ENCODE measurements at regions of chr20 and their contacts with region 1.

Region 1: DNA sequence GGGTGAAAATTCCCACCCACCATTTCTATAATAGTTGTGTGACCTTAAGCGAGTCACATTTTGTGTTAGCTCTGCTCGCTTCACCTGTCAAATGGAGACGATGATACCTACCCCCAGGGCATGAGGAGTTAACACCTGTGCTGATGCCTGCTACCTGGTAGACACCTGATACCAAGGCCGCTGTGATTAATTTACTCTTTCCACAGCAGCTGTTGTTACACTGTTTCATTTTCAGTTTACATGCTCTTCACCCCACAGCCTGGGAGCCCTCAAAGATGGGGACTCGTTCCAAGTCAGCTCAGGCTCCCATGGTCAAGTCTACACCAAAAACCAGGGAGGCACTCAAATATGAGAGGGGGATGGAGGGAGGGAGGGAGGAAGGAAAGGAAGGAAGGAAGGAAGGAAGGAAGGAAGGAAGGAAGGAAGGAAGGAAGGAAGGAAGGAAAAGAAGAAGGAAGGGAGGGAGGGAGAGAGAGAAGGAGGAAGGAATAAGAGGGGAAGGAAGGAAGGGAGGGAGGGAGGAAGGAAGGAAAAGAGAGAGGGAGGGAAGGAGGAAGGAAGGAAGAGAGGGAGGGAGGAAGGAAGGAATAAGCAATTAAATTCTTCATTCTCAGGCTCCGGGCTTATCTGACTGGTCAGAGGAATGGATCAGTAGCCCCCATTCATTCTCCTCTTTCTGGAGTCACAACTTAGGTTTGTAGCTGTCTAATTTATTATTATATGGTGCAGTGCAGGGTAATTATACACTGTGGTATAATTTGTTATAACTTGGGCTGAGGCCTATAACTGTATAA is 40.9 kb downstream of the PDYN start:
- DNase-seq: peak; percentile 48
- ATAC-seq: peak; percentile 25
- H3K4me3 ChIP-seq: peak overlapping the region in 2 of 5 experiments; percentile 4 to 42
- H3K4me3 Mint-ChIP-seq: peak overlapping the region; percentile 65
- H3K27ac ChIP-seq: peak overlapping the region; percentile 83 to 87
- H3K27ac Mint-ChIP-seq: peak overlapping the region; percentile 89
- H3K4me1 ChIP-seq: peaks cover 36 to 43% of the 10 kb centered on the region in 2 donors
- H3K4me1 Mint-ChIP-seq: peaks cover 40% of the 10 kb centered on the region
- H3K27me3 ChIP-seq: no peaks in the 10 kb centered on the region
- H3K27me3 Mint-ChIP-seq: peaks cover under 1% of the 10 kb centered on the region
- CTCF ChIP-seq: no peak

Region 2: GRCh38 chr20:1757072-1757471 is 195.9 kb before region 1 on chr20:
- CTCF ChIA-PET with region 1: no interaction called
- POLR2A ChIA-PET with region 1: no interaction called
- intact Hi-C with region 1: no loop called
- DNase-seq: no peak
- ATAC-seq: no peak
- H3K4me3 ChIP-seq: no peak overlapping the region
- H3K4me3 Mint-ChIP-seq: no peak overlapping the region
- H3K27ac ChIP-seq: no peak overlapping the region
- H3K27ac Mint-ChIP-seq: no peak overlapping the region
- H3K4me1 ChIP-seq: peaks cover 7 to 14% of the 10 kb centered on the region in 2 donors
- H3K4me1 Mint-ChIP-seq: peaks cover 15% of the 10 kb centered on the region
- H3K27me3 ChIP-seq: peaks cover 0 to 3% (median 0%) of the 10 kb centered on the region in 4 experiments
- H3K27me3 Mint-ChIP-seq: peaks cover 7% of the 10 kb centered on the region
- CTCF ChIP-seq: no peak

Region 3: DNA sequence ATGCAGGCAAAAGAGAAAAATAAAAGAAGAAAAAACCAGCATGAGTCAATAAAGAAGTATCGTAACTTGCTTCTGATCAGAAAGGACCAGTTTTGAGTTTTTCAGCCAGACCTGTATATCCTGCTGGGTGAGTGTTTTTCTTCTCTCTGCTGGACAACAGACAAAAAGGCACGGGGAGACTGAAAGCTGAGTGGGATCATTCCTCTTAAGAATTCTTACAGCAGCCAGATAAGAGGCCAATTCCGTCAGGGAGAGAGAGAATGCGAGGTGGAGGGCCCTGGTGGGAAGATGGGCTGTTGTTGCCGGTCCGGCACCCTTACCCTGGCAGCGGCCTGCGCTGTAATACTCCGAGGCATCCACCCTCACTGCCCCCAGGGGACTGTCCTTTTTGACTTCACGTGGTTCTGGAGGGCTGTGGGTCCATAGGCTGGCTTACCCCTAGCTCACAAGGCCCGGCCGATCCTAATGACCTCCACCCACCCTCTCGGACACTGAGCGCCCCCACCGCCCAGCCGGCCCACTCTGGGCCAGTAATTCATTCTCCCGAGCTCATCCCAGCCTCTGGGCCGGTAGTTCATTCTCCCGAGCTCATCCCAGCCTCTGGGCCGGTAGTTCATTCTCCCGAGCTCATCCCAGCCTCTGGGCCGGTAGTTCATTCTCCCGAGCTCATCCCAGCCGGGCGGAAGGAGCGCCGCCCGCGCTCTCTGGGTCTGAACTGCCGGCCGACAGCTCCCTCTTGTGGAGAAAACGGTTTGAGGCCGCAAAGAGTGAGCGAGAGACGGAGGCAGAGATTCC is 176.1 kb before region 1 on chr20:
- CTCF ChIA-PET with region 1: interaction called, 5 read pairs
- POLR2A ChIA-PET with region 1: no interaction called
- intact Hi-C with region 1: loop called (anchors 10 kb)
- DNase-seq: peak; percentile 87
- ATAC-seq: peak; percentile 92
- H3K4me3 ChIP-seq: peak overlapping the region in 4 of 5 experiments; percentile 64 to 95 (median 74)
- H3K4me3 Mint-ChIP-seq: peak overlapping the region; percentile 93
- H3K27ac ChIP-seq: peak overlapping the region; percentile 32 to 66
- H3K27ac Mint-ChIP-seq: peak overlapping the region; percentile 65
- H3K4me1 ChIP-seq: peaks cover 11 to 13% of the 10 kb centered on the region in 2 donors
- H3K4me1 Mint-ChIP-seq: peaks cover 16% of the 10 kb centered on the region
- H3K27me3 ChIP-seq: peaks cover 0 to 10% (median 2%) of the 10 kb centered on the region in 4 experiments
- H3K27me3 Mint-ChIP-seq: peaks cover 16% of the 10 kb centered on the region
- CTCF ChIP-seq: peak; percentile 78

Region 4: GRCh38 chr20:1844325-1845162 is 108.4 kb before region 1 on chr20:
- CTCF ChIA-PET with region 1: no interaction called
- POLR2A ChIA-PET with region 1: interaction called, 4 read pairs
- intact Hi-C with region 1: loop called (anchors 2 kb)
- DNase-seq: peak; percentile 91
- ATAC-seq: peak; percentile 98
- H3K4me3 ChIP-seq: peak overlapping the region in 1 of 5 experiments; percentile 9
- H3K4me3 Mint-ChIP-seq: peak overlapping the region; percentile 77
- H3K27ac ChIP-seq: peak overlapping the region; percentile 29 to 55
- H3K27ac Mint-ChIP-seq: peak overlapping the region; percentile 91
- H3K4me1 ChIP-seq: peaks cover 46 to 50% of the 10 kb centered on the region in 2 donors
- H3K4me1 Mint-ChIP-seq: peaks cover 69% of the 10 kb centered on the region
- H3K27me3 ChIP-seq: no peaks in the 10 kb centered on the region
- H3K27me3 Mint-ChIP-seq: no peaks in the 10 kb centered on the region
- CTCF ChIP-seq: no peak

Region 5: DNA sequence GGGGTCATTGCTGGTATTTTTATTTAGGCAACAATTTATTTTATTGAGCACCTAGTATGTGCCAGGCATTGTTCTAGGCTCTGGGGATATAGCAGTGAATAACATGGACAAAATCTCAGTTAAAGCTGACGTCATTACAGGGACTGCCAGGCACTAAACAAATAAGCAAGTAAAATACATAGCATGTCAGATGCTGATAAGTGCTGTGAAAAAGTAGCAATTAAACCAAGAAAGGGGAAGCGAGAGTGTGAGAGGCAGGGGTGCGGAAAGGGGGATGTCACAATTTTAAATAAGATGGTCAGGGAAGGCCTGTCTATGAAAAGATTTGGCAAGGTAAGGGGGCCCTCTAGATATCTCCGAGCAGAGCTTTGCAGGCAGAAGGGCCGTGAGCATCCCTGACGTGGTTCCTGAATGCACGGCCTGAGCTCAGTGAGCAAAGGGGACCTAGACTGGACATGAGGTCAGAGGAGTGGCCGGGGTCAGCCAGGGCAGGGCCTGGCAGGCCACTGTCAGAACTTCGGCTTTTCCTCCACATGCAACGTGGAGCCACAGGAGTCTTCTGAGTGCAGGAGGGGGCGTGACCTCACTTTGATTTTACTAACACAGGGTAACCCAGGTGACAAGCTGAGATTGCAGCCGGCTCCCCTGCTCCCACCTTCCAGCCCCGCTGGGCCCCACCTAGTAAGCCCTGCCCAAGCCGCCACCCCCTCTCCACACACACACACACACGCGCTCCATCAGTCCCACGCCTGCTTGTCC is 82.0 kb before region 1 on chr20:
- CTCF ChIA-PET with region 1: no interaction called
- POLR2A ChIA-PET with region 1: interaction called, 10 read pairs
- intact Hi-C with region 1: loop called (anchors 1 kb)
- DNase-seq: peak; percentile 91
- ATAC-seq: peak; percentile 79
- H3K4me3 ChIP-seq: no peak overlapping the region
- H3K4me3 Mint-ChIP-seq: peak overlapping the region; percentile 48
- H3K27ac ChIP-seq: peak overlapping the region; percentile 46 to 66
- H3K27ac Mint-ChIP-seq: peak overlapping the region; percentile 83
- H3K4me1 ChIP-seq: peaks cover 52 to 53% of the 10 kb centered on the region in 2 donors
- H3K4me1 Mint-ChIP-seq: peaks cover 60% of the 10 kb centered on the region
- H3K27me3 ChIP-seq: peaks cover 0 to 18% (median 6%) of the 10 kb centered on the region in 4 experiments
- H3K27me3 Mint-ChIP-seq: peaks cover 6% of the 10 kb centered on the region
- CTCF ChIP-seq: no peak

Region 6: GRCh38 chr20:1900321-1900801 is 52.6 kb before region 1 on chr20:
- CTCF ChIA-PET with region 1: interaction called, 3 read pairs
- POLR2A ChIA-PET with region 1: interaction called, 4 read pairs
- intact Hi-C with region 1: loop called (anchors 1 kb)
- DNase-seq: peak; percentile 52
- ATAC-seq: peak; percentile 22
- H3K4me3 ChIP-seq: no peak overlapping the region
- H3K4me3 Mint-ChIP-seq: no peak overlapping the region
- H3K27ac ChIP-seq: no peak overlapping the region
- H3K27ac Mint-ChIP-seq: no peak overlapping the region
- H3K4me1 ChIP-seq: peaks cover 33 to 37% of the 10 kb centered on the region in 2 donors
- H3K4me1 Mint-ChIP-seq: peaks cover 45% of the 10 kb centered on the region
- H3K27me3 ChIP-seq: no peaks in the 10 kb centered on the region
- H3K27me3 Mint-ChIP-seq: no peaks in the 10 kb centered on the region
- CTCF ChIP-seq: peak; percentile 37

Region 7: GRCh38 chr20:1965520-1966351 is 12.8 kb after region 1 on chr20:
- CTCF ChIA-PET with region 1: interaction called, 42 read pairs
- POLR2A ChIA-PET with region 1: interaction called, 9 read pairs
- intact Hi-C with region 1: loop called (anchors 1 kb)
- DNase-seq: peak; percentile 87
- ATAC-seq: peak; percentile 88
- H3K4me3 ChIP-seq: peak overlapping the region; percentile 9 to 57 (median 42)
- H3K4me3 Mint-ChIP-seq: peak overlapping the region; percentile 50
- H3K27ac ChIP-seq: no peak overlapping the region
- H3K27ac Mint-ChIP-seq: no peak overlapping the region
- H3K4me1 ChIP-seq: peaks cover 16 to 18% of the 10 kb centered on the region in 2 donors
- H3K4me1 Mint-ChIP-seq: peaks cover 18% of the 10 kb centered on the region
- H3K27me3 ChIP-seq: no peaks in the 10 kb centered on the region
- H3K27me3 Mint-ChIP-seq: peaks cover 2% of the 10 kb centered on the region
- CTCF ChIP-seq: peak; percentile 93

Region 8: GRCh38 chr20:2022163-2022562 is 69.2 kb after region 1 on chr20:
- CTCF ChIA-PET with region 1: no interaction called
- POLR2A ChIA-PET with region 1: no interaction called
- intact Hi-C with region 1: no loop called
- DNase-seq: no peak
- ATAC-seq: no peak
- H3K4me3 ChIP-seq: no peak overlapping the region
- H3K4me3 Mint-ChIP-seq: no peak overlapping the region
- H3K27ac ChIP-seq: no peak overlapping the region
- H3K27ac Mint-ChIP-seq: no peak overlapping the region
- H3K4me1 ChIP-seq: no peaks in the 10 kb centered on the region
- H3K4me1 Mint-ChIP-seq: no peaks in the 10 kb centered on the region
- H3K27me3 ChIP-seq: peaks cover 0 to 5% (median 1%) of the 10 kb centered on the region in 4 experiments
- H3K27me3 Mint-ChIP-seq: peaks cover 27% of the 10 kb centered on the region
- CTCF ChIP-seq: no peak

Region 9: DNA sequence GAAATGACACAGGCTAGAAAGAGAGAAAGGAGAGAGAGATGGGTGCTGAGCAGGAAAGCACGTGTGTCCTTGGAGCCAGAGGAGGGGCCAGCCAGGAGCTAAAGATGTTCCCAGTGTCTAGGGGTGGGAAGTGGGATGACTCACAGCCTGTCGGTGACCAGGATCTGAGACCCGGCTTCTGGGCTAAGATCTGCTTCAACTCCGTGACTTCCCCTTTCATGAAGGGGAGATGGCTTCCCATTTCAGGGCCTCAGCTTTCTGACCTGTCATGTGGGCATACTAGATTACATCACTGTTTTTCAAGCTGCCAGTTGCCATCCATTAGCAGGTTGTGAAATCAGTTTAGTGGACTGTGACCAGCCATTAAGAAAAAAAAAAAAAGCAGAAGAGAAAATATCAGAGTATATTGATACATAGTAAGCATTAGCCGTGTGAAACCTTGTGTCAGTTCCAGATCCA is 348.3 kb after region 1 on chr20:
- CTCF ChIA-PET with region 1: no interaction called
- POLR2A ChIA-PET with region 1: no interaction called
- intact Hi-C with region 1: loop called (anchors 2 kb)
- DNase-seq: peak; percentile 89
- ATAC-seq: peak; percentile 95
- H3K4me3 ChIP-seq: peak overlapping the region in 2 of 5 experiments; percentile 2 to 27
- H3K4me3 Mint-ChIP-seq: peak overlapping the region; percentile 61
- H3K27ac ChIP-seq: peak overlapping the region; percentile 82 to 91
- H3K27ac Mint-ChIP-seq: peak overlapping the region; percentile 93
- H3K4me1 ChIP-seq: peaks cover 23 to 24% of the 10 kb centered on the region in 2 donors
- H3K4me1 Mint-ChIP-seq: peaks cover 22% of the 10 kb centered on the region
- H3K27me3 ChIP-seq: peaks cover 0 to 6% (median 0%) of the 10 kb centered on the region in 4 experiments
- H3K27me3 Mint-ChIP-seq: no peaks in the 10 kb centered on the region
- CTCF ChIP-seq: no peak

Measured in B cell (primary cell).